AG04449 (cell line): ENCODE measurements at regions of chr1 and their contacts with region 1.

Region 1: GRCh38 chr1:231590453-231591198 is 36.0 kb upstream of the DISC1 start:
- DNase-seq: peak; percentile 26
- H3K4me3 ChIP-seq: no peak overlapping the region
- CTCF ChIP-seq: peak; percentile 76

Region 2: DNA sequence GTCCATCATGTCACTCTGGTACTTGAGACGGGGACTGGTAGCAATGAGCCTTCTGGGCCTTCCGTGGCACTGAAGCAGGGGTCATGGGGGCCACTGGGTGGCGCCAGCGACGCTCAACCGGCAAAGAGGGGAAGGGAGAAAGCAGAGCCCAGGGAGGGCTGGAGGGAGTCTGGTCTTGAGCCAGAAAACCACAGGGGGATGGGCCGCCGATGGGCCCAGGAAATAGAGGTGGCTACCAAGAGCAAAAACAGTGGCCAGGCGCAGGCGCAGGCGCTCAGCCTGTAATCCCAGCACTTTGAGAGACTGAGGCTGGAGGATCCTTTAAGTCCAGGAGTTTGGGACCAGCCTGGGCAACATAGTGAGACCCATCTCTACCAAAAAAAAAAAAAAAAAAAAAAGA is 274.7 kb before region 1 on chr1:
- CTCF ChIA-PET with region 1: interaction called, 14 read pairs
- POLR2A ChIA-PET with region 1: no interaction called
- DNase-seq: no peak
- H3K4me3 ChIP-seq: no peak overlapping the region
- CTCF ChIP-seq: peak; percentile 64

Region 3: DNA sequence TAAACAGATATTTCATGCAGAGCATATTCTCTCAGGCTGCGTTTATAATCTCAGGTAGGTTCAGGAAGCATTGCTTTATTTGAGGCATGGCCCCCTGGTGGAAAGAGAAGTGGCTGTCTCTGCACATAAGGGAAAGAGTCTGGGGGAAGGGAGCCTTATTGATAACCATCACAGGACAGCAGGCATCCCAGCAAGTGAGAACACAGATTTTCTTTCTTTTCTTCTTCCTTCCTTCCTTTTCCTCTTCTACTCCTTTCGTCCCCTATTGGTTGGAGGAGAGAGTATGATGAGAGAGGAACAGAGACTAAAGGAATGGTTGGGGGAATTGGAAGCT is 40.2 kb before region 1 on chr1:
- CTCF ChIA-PET with region 1: no interaction called
- POLR2A ChIA-PET with region 1: no interaction called
- DNase-seq: no peak
- H3K4me3 ChIP-seq: no peak overlapping the region
- CTCF ChIP-seq: peak; percentile 35

Region 4: GRCh38 chr1:231576804-231577718 is 13.6 kb before region 1 on chr1:
- CTCF ChIA-PET with region 1: interaction called, 10 read pairs
- POLR2A ChIA-PET with region 1: no interaction called
- DNase-seq: no peak
- H3K4me3 ChIP-seq: no peak overlapping the region
- CTCF ChIP-seq: no peak

Region 5: DNA sequence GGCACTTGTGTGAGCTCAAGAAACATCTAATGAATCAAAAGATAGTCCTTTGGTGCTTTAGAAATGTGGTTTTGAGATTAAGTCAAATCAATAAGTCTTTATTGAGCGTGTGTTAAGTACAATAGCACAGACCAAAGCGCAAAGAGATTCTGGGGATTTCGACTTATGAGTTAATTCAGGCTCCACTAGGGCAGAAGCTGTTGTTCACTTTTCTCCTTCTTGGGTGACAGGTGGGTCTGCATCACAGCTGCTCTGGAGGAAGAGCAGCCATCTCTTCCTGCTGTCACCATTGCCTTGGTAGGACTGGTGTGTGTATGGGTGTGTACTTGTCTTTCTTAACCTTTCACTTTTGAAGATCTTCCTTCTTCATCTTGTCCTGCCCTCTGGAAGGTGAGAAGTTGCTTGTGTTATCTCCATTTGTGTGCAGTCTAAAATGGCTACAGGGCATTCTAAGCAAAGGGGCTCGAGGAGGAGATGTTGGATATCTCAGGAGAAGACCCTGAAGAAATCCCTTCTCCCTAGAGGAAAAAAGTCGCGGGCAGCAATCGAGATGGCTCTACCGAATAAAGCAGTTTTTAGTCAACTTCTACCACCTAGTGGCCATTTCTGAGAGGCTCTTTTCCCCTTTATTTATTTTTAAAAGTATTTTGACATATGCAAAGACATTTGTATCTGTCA is 13.1 kb after region 1 on chr1:
- CTCF ChIA-PET with region 1: interaction called, 53 read pairs
- POLR2A ChIA-PET with region 1: no interaction called
- DNase-seq: no peak
- H3K4me3 ChIP-seq: peak overlapping the region; percentile 60
- CTCF ChIP-seq: peak; percentile 42